Posterior cingulate gyrus (tissue), 11 donors: ENCODE measurements at regions of chr15 and their contacts with region 1.

Region 1: GRCh38 chr15:99169769-99170311 is 65.0 kb downstream of the SYNM start:
- DNase-seq: no peak

Region 2: DNA sequence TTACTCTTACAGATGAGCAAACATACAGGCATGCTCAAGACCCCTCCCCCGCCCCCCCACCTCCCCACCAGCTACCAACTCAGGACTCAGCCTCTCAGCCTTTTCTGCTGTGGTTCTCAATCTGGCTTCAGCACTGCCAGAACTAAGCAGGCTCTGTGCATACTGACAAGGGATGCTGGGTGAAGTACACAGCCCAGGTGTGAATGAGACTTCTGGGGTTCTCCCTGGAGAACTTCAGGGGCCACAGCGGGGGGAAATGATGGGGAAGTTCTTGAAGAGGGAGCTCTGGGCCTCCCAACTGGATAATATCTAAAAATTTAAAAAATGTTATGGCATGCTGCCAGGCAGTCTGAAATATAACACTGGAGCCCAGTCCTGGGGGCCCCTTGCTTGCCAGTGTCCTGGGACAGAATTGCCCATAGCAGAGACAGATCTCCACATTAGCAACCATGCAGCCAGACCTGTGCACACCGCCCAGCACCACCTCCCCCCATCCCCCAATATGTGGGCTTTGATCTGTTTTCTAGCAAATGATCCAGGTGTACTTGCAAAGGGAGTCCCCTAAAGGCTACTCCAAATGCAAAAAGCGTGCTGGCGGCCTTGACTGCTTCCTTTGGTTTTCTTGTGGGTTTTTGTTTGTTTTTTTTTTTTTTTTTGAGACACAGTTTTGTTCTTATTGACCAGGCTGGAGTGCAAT is 203.6 kb before region 1 on chr15:
- intact Hi-C with region 1: no loop called
- DNase-seq: peak in 1 of 10 donors; percentile 65

Region 3: GRCh38 chr15:99213187-99213811 is 43.5 kb after region 1 on chr15:
- intact Hi-C with region 1: loop called (anchors 2 kb)
- DNase-seq: peak; percentile 69 to 97 (median 85)